Endothelial cell of umbilical vein (primary cell): ENCODE measurements at regions of chr3 and their contacts with region 1.

Region 1: DNA sequence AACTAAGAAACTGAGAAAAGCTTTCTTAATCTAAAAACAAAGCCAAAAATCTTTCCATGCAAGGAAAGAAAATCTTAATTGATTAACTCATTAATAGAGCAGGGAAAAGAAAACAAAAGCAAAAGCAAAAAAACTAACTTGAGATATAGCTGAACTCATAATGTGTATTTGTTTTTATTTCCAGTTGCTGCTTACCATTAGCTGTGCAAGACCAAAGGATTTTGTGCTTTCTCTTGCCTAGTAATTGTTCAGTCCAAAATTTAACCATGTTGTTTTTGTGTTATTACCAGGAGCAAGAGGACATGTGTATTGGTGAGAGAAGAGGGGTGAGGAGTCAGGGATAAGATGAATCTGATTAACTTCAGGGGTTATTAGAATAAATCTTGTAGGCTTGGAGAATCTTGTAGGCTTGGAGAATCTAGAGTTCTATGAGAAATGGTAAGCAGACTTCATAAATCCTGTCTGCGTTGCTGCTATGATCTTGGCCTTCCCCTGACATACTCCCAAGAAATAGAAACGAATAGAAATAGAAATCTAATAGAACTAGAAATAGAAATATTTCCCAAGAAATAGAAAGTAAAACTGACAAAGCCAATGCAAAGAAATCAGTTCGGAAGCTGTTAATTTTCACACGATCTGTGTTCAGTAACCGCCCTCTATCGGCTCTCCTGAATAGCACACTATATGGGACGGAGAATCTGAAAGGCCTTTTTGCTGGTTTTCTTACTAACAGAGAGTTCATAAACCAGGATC is 72.6 kb upstream of the TNFSF10 start:
- DNase-seq: peak; percentile 78
- H3K4me3 ChIP-seq: peak overlapping the region in 2 of 3 experiments; percentile 18 to 53
- H3K27ac ChIP-seq: peak overlapping the region; percentile 19
- H3K4me1 ChIP-seq: peaks cover 16% of the 10 kb centered on the region
- H3K27me3 ChIP-seq: no peaks in the 10 kb centered on the region
- CTCF ChIP-seq: peak; percentile 70 to 73
- POLR2A ChIP-seq: no peak

Region 2: DNA sequence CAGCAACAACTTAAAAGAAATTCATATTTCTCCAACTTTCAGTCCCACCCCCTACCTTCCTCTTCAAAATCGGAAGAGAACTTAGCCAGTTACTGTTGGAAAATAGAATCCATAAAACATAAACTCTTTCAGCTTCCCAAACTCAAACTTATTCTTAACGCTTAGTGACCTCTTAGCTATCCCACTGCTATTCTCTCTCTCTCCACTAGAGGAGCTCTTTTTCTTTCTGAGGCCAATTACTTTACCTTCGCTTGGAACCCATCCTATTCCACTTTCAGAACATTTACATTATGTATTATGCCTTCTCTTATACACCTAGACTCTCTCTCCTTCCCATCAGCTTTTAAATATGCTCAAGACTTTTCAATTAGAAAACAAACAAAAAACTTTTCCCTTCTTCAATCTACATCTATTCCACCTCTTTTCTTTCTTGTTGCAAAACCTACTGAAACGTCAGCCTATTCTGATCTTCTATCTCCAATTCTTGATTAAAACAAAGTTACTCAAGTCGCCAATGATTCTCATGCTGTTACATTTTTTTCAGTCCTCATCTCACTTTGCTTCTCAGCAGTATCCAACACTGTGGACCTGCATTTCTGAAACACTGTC is 134.2 kb before region 1 on chr3:
- CTCF ChIA-PET with region 1: interaction called, 42 read pairs
- POLR2A ChIA-PET with region 1: no interaction called
- dilution Hi-C with region 1: no loop called
- intact Hi-C with region 1: no loop called
- DNase-seq: no peak
- H3K4me3 ChIP-seq: no peak overlapping the region
- H3K27ac ChIP-seq: no peak overlapping the region
- H3K4me1 ChIP-seq: peaks cover 7% of the 10 kb centered on the region
- H3K27me3 ChIP-seq: peaks cover 0 to 2% of the 10 kb centered on the region in 2 experiments
- CTCF ChIP-seq: peak; percentile 72 to 77
- POLR2A ChIP-seq: no peak

Region 3: GRCh38 chr3:172501560-172501959 is 94.3 kb before region 1 on chr3:
- CTCF ChIA-PET with region 1: interaction called, 11 read pairs
- POLR2A ChIA-PET with region 1: interaction called, 5 read pairs
- dilution Hi-C with region 1: no loop called
- intact Hi-C with region 1: no loop called
- DNase-seq: no peak
- H3K4me3 ChIP-seq: no peak overlapping the region
- H3K27ac ChIP-seq: no peak overlapping the region
- H3K4me1 ChIP-seq: no peaks in the 10 kb centered on the region
- H3K27me3 ChIP-seq: peaks cover 4% of the 10 kb centered on the region in 2 experiments
- CTCF ChIP-seq: no peak
- POLR2A ChIP-seq: no peak

Region 4: DNA sequence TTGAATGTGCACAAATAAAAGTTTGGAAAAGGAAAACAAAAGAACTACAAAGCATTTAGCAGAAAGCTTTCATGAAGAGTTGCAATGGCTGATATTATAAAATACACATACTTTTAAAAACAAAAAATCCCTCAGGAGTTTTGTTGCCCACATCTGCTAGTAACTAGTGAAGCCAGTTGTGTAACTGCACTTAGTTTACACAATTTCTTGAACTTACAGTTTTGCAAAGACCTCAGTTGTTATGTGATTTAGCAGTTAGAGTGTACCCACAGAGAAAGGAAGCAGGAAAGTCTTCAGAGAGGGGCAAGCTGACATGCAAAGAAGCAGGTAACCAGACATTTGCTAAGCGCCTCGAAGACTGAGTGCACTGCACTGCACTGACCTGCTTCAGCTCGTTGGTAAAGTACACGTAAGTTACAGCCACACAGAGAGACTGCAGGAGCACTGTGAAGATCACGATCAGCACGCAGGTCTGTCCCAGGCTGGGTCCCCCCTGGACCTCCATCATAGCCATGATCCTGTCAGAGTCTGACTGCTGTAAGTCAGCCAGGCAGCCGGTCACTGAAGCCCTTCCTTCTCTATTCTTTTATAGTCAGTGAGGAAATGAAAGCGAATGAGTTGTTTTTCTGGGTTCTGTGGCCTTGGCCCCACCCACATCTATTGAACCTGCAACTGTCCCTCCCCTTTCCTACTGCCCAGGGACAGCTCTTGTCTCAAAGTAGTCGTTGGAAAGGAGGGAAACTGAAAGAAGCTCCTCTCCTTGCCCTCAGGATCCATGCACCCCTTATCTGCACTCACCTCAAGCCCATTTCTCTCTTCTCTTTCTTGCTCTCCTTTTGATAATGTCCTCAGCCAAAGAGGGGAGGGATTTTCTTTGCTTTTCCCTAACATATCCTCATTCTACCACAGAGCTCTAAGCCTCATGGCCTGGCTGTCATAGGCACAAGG is 72.7 kb before region 1 on chr3 and contains the start of gene TNFSF10:
- CTCF ChIA-PET with region 1: interaction called, 19 read pairs
- POLR2A ChIA-PET with region 1: interaction called, 9 read pairs
- dilution Hi-C with region 1: no loop called
- intact Hi-C with region 1: no loop called
- DNase-seq: peak; percentile 91
- H3K4me3 ChIP-seq: peak within 1 kb of the TSS in 2 of 3 experiments; percentile 34 to 67
- H3K27ac ChIP-seq: no peak within 1 kb of the TSS
- H3K4me1 ChIP-seq: peaks cover 20% of the 10 kb centered on the region
- H3K27me3 ChIP-seq: no peaks in the 10 kb centered on the region
- CTCF ChIP-seq: no peak
- POLR2A ChIP-seq: peak; percentile 54
- total RNA-seq, gene TNFSF10: 18.5 and 31.2 TPM in 2 replicates

Region 5: GRCh38 chr3:172562871-172563863 is 32.6 kb before region 1 on chr3:
- CTCF ChIA-PET with region 1: interaction called, 21 read pairs
- POLR2A ChIA-PET with region 1: no interaction called
- dilution Hi-C with region 1: no loop called
- intact Hi-C with region 1: no loop called
- DNase-seq: peak; percentile 90
- H3K4me3 ChIP-seq: peak overlapping the region in 2 of 3 experiments; percentile 22 to 35
- H3K27ac ChIP-seq: peak overlapping the region; percentile 75
- H3K4me1 ChIP-seq: peaks cover 15% of the 10 kb centered on the region
- H3K27me3 ChIP-seq: no peaks in the 10 kb centered on the region
- CTCF ChIP-seq: no peak
- POLR2A ChIP-seq: peak; percentile 26

Region 6: GRCh38 chr3:172622916-172623700 is 27.3 kb after region 1 on chr3:
- CTCF ChIA-PET with region 1: interaction called, 31 read pairs
- POLR2A ChIA-PET with region 1: no interaction called
- dilution Hi-C with region 1: no loop called
- intact Hi-C with region 1: loop called (anchors 1 kb)
- DNase-seq: peak; percentile 88
- H3K4me3 ChIP-seq: peak overlapping the region in 1 of 3 experiments; percentile 26
- H3K27ac ChIP-seq: peak overlapping the region; percentile 42
- H3K4me1 ChIP-seq: peaks cover 16% of the 10 kb centered on the region
- H3K27me3 ChIP-seq: no peaks in the 10 kb centered on the region
- CTCF ChIP-seq: peak; percentile 50 to 53
- POLR2A ChIP-seq: no peak

Region 7: GRCh38 chr3:172673210-172673679 is 77.4 kb after region 1 on chr3:
- CTCF ChIA-PET with region 1: interaction called, 33 read pairs
- POLR2A ChIA-PET with region 1: no interaction called
- dilution Hi-C with region 1: no loop called
- intact Hi-C with region 1: no loop called
- DNase-seq: peak; percentile 75
- H3K4me3 ChIP-seq: no peak overlapping the region
- H3K27ac ChIP-seq: no peak overlapping the region
- H3K4me1 ChIP-seq: peaks cover 34% of the 10 kb centered on the region
- H3K27me3 ChIP-seq: no peaks in the 10 kb centered on the region
- CTCF ChIP-seq: peak; percentile 68
- POLR2A ChIP-seq: no peak